CD4-positive, alpha-beta memory T cell (primary cell): ENCODE measurements at regions of chr6 and their contacts with region 1.

Region 1: DNA sequence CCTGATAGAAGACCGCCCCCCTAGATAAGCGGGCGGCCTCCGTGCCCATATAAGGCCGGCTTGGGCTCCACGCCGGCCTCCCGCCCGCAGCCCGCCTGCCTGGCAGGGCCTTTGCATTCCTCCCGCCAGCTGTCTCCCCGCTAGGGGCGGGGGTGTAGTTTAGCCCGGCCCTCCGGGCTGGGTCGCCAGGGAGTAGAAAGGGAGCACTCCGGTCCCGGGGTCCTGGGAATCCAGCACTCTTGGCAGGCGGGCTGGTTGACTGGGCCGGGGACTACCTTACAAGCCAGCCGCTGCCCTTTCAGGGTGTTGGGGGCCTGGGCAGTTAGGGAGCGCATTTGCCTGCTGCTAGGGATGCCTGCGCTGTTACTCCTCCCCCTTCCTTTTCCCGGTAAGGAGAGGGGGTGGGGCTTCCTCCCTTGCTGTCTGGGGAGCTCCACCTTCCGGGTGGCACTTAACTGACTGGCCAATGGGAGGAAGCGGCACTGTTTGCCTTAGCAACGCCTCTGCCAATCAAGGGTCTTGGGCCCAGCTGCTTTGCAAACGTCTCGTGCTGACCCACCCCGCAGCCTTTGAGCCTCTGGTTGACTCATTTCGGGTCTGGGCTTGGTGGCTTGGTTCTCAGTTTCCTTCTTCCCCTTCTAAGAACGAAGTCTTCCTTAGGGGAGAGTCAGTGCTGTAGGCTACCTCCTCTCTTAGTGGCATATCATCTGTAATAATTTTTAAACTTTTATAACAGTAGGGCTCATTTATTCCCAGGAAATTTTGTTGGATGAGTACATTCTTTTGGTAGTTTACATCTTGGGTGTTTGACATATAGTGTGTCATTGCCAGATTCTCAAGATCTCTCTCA is 3.4 kb downstream of the SRF start:
- DNase-seq: peak; percentile 89 to 97 (median 91)
- H3K4me3 ChIP-seq: peak overlapping the region; percentile 22 to 49
- H3K4me3 Mint-ChIP-seq: peak overlapping the region; percentile 77 to 99 (median 93)
- H3K27ac ChIP-seq: peak overlapping the region; percentile 83
- H3K27ac Mint-ChIP-seq: peak overlapping the region; percentile 93 to 98 (median 97)
- H3K4me1 ChIP-seq: peaks cover 47% of the 10 kb centered on the region
- H3K4me1 Mint-ChIP-seq: peaks cover 29 to 56% (median 42%) of the 10 kb centered on the region in 4 donors
- H3K27me3 ChIP-seq: no peaks in the 10 kb centered on the region
- H3K27me3 Mint-ChIP-seq: no peaks in the 10 kb centered on the region

Region 2: GRCh38 chr6:42563697-42564505 is 610.6 kb before region 1 on chr6 and contains the start of gene UBR2:
- CTCF ChIA-PET with region 1: no interaction called
- POLR2A ChIA-PET with region 1: interaction called, 3 read pairs
- intact Hi-C with region 1: loop called (anchors 2 kb)
- DNase-seq: peak; percentile 92 to 98 (median 95)
- H3K4me3 ChIP-seq: peak within 1 kb of the TSS; percentile 98 to 100
- H3K4me3 Mint-ChIP-seq: peak within 1 kb of the TSS; percentile 92 to 100 (median 98)
- H3K27ac ChIP-seq: peak within 1 kb of the TSS; percentile 94
- H3K27ac Mint-ChIP-seq: peak within 1 kb of the TSS; percentile 90 to 98 (median 96)
- H3K4me1 ChIP-seq: peaks cover 33% of the 10 kb centered on the region
- H3K4me1 Mint-ChIP-seq: peaks cover 21 to 43% (median 28%) of the 10 kb centered on the region in 4 donors
- H3K27me3 ChIP-seq: no peaks in the 10 kb centered on the region
- H3K27me3 Mint-ChIP-seq: peaks cover 0 to 1% of the 10 kb centered on the region in 2 donors
- total RNA-seq, gene UBR2: 55.0 to 55.7 TPM

Region 3: DNA sequence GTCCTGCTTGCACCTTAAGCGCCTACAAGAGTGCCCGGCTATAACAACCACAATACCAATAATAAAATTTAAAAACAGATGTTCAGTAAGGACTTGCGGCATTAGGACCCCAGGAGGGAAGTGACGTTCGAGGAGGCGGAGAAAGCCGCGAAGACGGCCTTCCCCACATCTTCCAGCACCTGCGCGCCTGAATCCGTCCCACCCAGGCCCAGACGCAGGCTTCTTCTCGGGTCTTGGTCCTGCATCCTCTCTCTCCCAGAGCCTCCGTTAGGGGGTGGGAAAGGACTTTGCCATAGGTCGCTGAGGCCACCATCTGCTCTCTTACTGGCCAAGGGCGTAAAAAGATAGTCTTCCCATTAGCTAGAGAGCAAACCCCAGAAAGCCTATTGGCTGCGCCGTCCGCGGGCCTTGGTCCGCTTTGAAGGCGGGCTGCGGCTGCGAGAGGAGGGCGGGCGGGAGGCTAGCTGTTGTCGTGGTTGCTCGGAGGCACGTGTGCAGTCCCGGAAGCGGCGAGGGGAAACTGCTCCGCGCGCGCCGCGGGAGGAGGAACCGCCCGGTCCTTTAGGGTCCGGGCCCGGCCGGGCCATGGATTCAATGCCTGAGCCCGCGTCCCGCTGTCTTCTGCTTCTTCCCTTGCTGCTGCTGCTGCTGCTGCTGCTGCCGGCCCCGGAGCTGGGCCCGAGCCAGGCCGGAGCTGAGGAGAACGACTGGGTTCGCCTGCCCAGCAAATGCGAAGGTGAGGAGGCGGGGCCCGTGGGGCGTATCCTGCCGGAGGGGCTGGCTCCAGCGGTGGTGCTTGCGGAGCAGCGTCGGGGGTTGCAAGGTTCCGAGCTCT is 245.3 kb before region 1 on chr6 and contains the start of gene CNPY3:
- CTCF ChIA-PET with region 1: no interaction called
- POLR2A ChIA-PET with region 1: interaction called, 41 read pairs
- intact Hi-C with region 1: loop called (anchors 1 kb)
- DNase-seq: peak; percentile 95 to 97 (median 96)
- H3K4me3 ChIP-seq: peak within 1 kb of the TSS; percentile 79 to 89
- H3K4me3 Mint-ChIP-seq: peak within 1 kb of the TSS; percentile 97 to 100 (median 98)
- H3K27ac ChIP-seq: peak within 1 kb of the TSS; percentile 86
- H3K27ac Mint-ChIP-seq: peak within 1 kb of the TSS; percentile 98 to 100 (median 99)
- H3K4me1 ChIP-seq: peaks cover 49% of the 10 kb centered on the region
- H3K4me1 Mint-ChIP-seq: peaks cover 29 to 59% (median 42%) of the 10 kb centered on the region in 4 donors
- H3K27me3 ChIP-seq: no peaks in the 10 kb centered on the region
- H3K27me3 Mint-ChIP-seq: no peaks in the 10 kb centered on the region
- total RNA-seq, gene CNPY3: 83.4 to 86.7 TPM

Region 4: DNA sequence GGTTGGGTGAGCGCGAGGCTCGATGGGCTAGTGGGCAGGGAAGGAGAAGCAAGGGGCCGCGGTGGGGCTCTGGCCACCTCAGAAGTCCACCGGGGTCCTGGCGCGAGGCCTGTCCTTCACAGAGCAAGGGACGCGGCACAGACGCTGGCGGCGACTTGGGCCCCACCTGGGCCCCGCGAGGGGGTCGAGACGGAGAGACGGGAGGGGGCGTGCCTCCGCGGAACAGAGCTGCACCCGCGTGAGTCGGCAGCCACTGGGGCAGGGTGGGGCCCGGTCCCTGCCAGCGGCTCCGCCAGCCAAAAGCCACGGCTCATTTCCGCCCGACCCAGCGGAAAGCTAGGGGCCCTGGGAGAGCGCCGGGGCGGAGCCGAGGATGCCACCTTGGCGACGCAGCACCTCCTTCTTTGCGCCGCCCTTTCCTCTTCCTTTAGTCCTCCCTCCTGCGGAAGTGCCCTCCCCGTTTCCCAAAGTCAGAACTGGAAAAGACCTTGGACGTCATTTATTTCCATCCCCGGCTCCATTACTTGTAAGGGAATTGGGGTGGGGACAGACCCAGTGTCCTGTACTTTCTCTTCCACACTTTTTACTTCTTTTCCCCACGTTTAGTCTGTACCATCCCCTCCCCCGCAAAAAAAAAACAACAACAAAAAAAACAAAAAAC is 120.8 kb before region 1 on chr6 and contains the start of gene CUL7:
- CTCF ChIA-PET with region 1: no interaction called
- POLR2A ChIA-PET with region 1: interaction called, 4 read pairs
- intact Hi-C with region 1: loop called (anchors 1 kb)
- DNase-seq: peak; percentile 86 to 92 (median 88)
- H3K4me3 ChIP-seq: peak within 1 kb of the TSS; percentile 81 to 88
- H3K4me3 Mint-ChIP-seq: peak within 1 kb of the TSS; percentile 92 to 97 (median 94)
- H3K27ac ChIP-seq: peak within 1 kb of the TSS; percentile 85
- H3K27ac Mint-ChIP-seq: peak within 1 kb of the TSS; percentile 94 to 98 (median 97)
- H3K4me1 ChIP-seq: peaks cover 41% of the 10 kb centered on the region
- H3K4me1 Mint-ChIP-seq: peaks cover 22 to 51% (median 44%) of the 10 kb centered on the region in 4 donors
- H3K27me3 ChIP-seq: no peaks in the 10 kb centered on the region
- H3K27me3 Mint-ChIP-seq: no peaks in the 10 kb centered on the region
- total RNA-seq, gene CUL7: 13.7 to 13.9 TPM

Region 5: DNA sequence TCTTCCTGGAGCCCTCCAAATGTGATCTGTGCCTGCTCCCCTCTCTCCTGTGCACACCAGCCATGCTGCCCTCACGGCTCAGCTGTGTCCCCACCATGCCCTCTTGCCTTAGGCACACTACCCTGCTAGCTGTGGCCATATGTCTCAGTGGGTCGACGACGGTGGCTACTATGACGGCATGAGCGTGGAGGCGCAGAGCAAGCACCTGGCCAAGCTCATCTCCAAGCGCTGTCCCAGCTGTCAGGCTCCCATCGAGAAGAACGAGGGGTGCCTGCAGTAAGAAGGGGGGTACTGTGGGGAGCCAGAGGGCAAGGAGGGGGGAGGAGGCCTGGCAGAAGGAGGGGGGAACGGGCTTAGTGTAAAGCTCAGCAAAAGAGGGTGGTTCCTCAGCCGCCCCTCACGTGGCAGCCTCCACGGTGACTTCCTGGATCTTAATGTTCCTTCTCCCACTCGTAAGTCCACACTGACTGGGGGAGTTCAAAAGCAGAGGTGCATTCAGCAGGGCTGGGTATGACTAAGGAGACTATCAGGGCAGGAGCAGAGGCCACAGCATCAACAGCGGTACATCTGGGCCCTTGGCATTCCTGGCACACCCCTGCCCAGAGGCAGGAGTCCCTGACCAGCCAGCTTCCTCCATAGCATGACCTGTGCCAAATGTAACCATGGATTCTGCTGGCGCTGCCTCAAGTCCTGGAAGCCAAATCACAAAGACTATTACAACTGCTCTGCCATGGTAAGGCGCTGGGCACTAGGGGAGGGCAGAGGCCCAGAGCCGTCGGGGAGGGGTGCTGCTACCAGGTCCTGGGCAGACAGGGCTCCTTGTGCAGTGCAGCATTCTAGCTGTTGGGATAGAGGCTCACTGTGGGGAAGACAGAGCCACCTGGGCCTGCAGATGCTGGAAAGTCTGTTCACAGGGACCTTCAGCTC is 46.8 kb after region 1 on chr6:
- CTCF ChIA-PET with region 1: interaction called, 4 read pairs
- POLR2A ChIA-PET with region 1: interaction called, 39 read pairs
- intact Hi-C with region 1: loop called (anchors 1 kb)
- DNase-seq: no peak
- H3K4me3 ChIP-seq: no peak overlapping the region
- H3K4me3 Mint-ChIP-seq: peak overlapping the region in 3 of 8 donors; percentile 41 to 60 (median 44)
- H3K27ac ChIP-seq: peak overlapping the region; percentile 26
- H3K27ac Mint-ChIP-seq: peak overlapping the region; percentile 82 to 97 (median 85)
- H3K4me1 ChIP-seq: peaks cover 45% of the 10 kb centered on the region
- H3K4me1 Mint-ChIP-seq: peaks cover 23 to 47% (median 35%) of the 10 kb centered on the region in 4 donors
- H3K27me3 ChIP-seq: no peaks in the 10 kb centered on the region
- H3K27me3 Mint-ChIP-seq: no peaks in the 10 kb centered on the region

Region 6: GRCh38 chr6:43254138-43254817 is 79.8 kb after region 1 on chr6:
- CTCF ChIA-PET with region 1: no interaction called
- POLR2A ChIA-PET with region 1: no interaction called
- intact Hi-C with region 1: no loop called
- DNase-seq: no peak
- H3K4me3 ChIP-seq: no peak overlapping the region
- H3K4me3 Mint-ChIP-seq: no peak overlapping the region
- H3K27ac ChIP-seq: no peak overlapping the region
- H3K27ac Mint-ChIP-seq: no peak overlapping the region
- H3K4me1 ChIP-seq: no peaks in the 10 kb centered on the region
- H3K4me1 Mint-ChIP-seq: peaks cover 0 to 7% (median 4%) of the 10 kb centered on the region in 4 donors
- H3K27me3 ChIP-seq: peaks cover 5% of the 10 kb centered on the region
- H3K27me3 Mint-ChIP-seq: peaks cover 6 to 21% of the 10 kb centered on the region in 2 donors

Region 7: DNA sequence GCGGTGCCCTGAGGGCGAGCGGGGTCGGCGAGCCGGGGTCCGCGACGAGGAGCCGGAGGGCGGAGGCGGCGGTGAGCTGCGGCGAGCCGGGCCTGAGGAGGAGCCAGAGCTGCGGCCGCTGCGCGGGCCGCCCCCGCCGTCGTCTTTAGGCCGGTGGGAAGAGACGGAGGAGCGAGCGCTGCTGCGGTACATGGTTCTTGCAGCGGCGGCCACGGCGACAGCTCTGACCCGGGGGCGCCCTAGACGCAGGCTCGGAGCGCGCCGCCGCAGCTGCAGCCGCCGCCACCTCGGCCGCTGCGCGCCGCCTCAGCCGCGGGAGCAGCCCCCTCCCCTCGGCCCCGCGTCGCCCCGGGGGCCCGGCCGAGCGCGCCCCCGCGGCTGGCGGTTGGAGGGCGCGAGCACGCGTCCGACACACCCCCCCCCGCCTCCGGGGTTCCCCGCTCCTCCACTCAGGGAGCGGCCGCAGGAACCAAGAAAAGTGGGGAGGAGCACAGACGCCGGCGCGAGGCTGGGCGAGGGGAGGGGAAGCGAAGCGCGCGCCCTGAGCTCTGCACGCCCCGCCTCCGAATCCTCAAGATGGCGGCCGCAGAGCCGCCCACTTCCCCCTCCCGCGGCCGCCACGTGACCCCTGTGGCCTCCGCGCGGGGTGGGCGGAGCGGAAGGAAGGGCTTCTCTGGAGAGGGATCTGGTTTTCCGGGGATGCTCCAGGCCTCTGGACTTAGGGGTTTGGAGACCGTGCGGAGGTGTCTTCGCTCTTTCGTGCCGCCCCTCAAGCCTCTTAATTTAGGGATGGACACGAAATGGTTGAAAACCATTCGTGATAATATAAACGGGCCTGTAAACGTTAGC is 194.9 kb after region 1 on chr6 and contains the start of gene ZNF318:
- CTCF ChIA-PET with region 1: no interaction called
- POLR2A ChIA-PET with region 1: interaction called, 3 read pairs
- intact Hi-C with region 1: loop called (anchors 1 kb)
- DNase-seq: peak; percentile 93 to 95 (median 95)
- H3K4me3 ChIP-seq: peak within 1 kb of the TSS; percentile 63 to 69
- H3K4me3 Mint-ChIP-seq: peak within 1 kb of the TSS; percentile 91 to 95 (median 94)
- H3K27ac ChIP-seq: peak within 1 kb of the TSS; percentile 86
- H3K27ac Mint-ChIP-seq: peak within 1 kb of the TSS; percentile 94 to 97 (median 97)
- H3K4me1 ChIP-seq: peaks cover 39% of the 10 kb centered on the region
- H3K4me1 Mint-ChIP-seq: peaks cover 32 to 53% (median 39%) of the 10 kb centered on the region in 4 donors
- H3K27me3 ChIP-seq: no peaks in the 10 kb centered on the region
- H3K27me3 Mint-ChIP-seq: no peaks in the 10 kb centered on the region
- total RNA-seq, gene ZNF318: 30.6 to 32.2 TPM

Region 8: GRCh38 chr6:43516697-43517504 is 342.4 kb after region 1 on chr6 and contains the starts of genes POLR1C and YIPF3:
- CTCF ChIA-PET with region 1: no interaction called
- POLR2A ChIA-PET with region 1: no interaction called
- intact Hi-C with region 1: loop called (anchors 2 kb)
- DNase-seq: peak; percentile 91 to 97 (median 96)
- H3K4me3 ChIP-seq: peak within 1 kb of the TSS; percentile 91 to 99
- H3K4me3 Mint-ChIP-seq: no peak within 1 kb of the TSS
- H3K27ac ChIP-seq: peak within 1 kb of the TSS; percentile 92
- H3K27ac Mint-ChIP-seq: no peak within 1 kb of the TSS
- H3K4me1 ChIP-seq: peaks cover 44% of the 10 kb centered on the region
- H3K4me1 Mint-ChIP-seq: peaks cover 10 to 36% (median 24%) of the 10 kb centered on the region in 4 donors
- H3K27me3 ChIP-seq: no peaks in the 10 kb centered on the region
- H3K27me3 Mint-ChIP-seq: no peaks in the 10 kb centered on the region
- total RNA-seq, gene POLR1C: 42.5 to 47.7 TPM
- total RNA-seq, gene YIPF3: 74.8 to 82.9 TPM

Region 9: GRCh38 chr6:43972913-43973300 is 798.4 kb after region 1 on chr6:
- CTCF ChIA-PET with region 1: no interaction called
- POLR2A ChIA-PET with region 1: no interaction called
- intact Hi-C with region 1: no loop called
- DNase-seq: no peak
- H3K4me3 ChIP-seq: no peak overlapping the region
- H3K4me3 Mint-ChIP-seq: no peak overlapping the region
- H3K27ac ChIP-seq: no peak overlapping the region
- H3K27ac Mint-ChIP-seq: no peak overlapping the region
- H3K4me1 ChIP-seq: no peaks in the 10 kb centered on the region
- H3K4me1 Mint-ChIP-seq: no peaks in the 10 kb centered on the region
- H3K27me3 ChIP-seq: no peaks in the 10 kb centered on the region
- H3K27me3 Mint-ChIP-seq: peaks cover 1 to 24% of the 10 kb centered on the region in 2 donors